ENCODE measurements at regions of chr2 and their contacts with region 1.

Region 1: DNA sequence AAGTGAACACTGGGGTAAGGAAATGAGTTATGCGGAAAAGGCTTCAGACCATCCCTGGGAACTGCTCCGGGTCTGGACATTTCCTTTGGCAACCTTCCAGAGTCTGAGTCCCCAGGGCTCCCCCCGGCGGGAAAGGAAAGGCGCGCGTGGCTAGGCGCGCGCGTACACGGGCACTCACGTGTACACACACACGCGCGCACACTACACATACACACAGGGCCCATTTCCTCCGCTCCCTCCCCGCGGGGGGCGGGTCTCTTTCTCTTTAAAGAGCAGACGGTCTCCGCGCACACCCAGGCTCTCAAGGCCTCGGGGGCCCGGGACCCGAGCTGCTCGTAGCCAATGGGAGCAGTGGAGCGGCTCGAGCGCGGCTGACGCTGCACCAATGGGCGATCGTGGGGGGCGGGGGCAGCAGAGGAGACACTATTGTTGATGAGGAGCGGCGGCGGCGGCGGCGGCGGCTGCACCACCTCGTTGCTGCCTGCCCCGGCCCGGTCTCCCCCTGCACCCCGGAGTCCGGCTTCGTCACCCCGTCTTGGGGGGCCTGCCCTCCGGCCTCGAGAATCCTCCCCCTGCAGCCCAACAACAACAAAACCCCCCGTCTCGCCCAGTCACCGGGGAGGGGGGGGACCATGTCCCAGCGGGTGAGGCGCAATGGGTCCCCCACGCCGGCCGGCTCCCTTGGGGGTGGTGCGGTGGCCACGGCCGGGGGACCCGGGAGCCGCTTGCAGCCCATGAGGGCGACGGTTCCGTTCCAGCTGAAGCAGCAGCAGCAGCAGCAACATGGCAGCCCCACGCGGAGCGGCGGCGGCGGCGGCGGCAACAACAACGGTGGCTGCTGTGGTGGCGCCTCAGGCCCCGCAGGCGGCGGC is at the start of gene FAM117B:
- DNase-seq: peak; percentile 90 to 99 (median 98)
- ATAC-seq: peak; percentile 93
- H3K4me3 ChIP-seq: peak within 1 kb of the TSS; percentile 81
- H3K4me3 Mint-ChIP-seq: peak within 1 kb of the TSS in 9 of 10 donors; percentile 93 to 98 (median 97)
- H3K27ac ChIP-seq: peak within 1 kb of the TSS; percentile 81
- H3K27ac Mint-ChIP-seq: peak within 1 kb of the TSS; percentile 92 to 99 (median 96)
- H3K4me1 ChIP-seq: peaks cover 22 to 29% of the 10 kb centered on the region in 2 donors
- H3K4me1 Mint-ChIP-seq: peaks cover 27 to 66% (median 61%) of the 10 kb centered on the region in 7 donors
- H3K27me3 ChIP-seq: no peaks in the 10 kb centered on the region
- H3K27me3 Mint-ChIP-seq: no peaks in the 10 kb centered on the region
- total RNA-seq, gene FAM117B: 12.8 to 57.9 (median 48.8) TPM

Region 2: DNA sequence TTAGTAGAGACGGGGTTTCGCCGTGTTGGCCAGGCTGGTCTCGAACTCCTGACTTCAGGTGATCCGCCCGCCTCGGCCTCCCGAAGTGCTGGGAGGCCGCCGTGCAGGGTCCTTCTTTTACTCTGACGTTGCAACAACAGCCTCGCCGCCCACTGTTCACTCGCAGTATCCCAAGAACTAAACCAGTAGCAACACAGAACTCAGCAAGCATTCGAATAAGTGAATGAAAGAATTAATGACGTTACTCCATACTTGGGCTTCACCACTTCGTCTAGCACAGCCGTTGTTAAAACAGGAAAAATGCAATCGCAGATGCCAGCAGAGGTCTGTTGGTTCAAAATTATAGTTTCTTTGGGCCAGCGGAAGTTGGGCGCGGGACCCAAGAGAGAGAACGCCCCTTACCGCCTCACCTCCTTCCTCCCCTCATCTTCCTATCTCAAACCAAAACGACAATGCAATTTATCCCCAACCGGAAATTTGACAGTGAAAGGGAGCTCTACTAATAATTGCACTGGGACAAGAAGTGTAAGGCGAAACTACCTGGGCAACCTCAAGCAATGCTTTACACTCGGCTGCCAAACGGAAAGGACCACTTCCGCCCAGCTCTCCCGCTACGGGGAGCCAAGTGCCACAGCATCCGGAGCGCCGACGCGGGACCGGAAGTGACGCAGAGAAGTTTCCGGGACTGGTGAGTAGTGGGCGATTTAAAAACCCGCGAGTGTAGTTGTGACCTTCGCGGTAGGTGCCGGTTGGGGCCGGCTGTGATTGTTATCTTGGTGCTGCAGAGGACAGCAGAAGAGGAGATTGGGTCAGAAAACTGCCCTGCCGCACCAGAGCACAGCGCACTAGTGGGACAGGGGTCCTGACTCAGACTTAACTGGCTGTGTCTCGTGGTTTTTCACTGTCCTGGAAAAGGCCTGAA is 1745.8 kb before region 1 on chr2 and contains the starts of genes NIF3L1 and PPIL3:
- CTCF ChIA-PET with region 1: no interaction called
- POLR2A ChIA-PET with region 1: no interaction called
- intact Hi-C with region 1: loop called in 1 of 2 experiments (anchors 2 kb)
- DNase-seq: peak; percentile 88 to 97 (median 95)
- ATAC-seq: peak; percentile 89
- H3K4me3 ChIP-seq: peak within 1 kb of the TSS; percentile 83
- H3K4me3 Mint-ChIP-seq: peak within 1 kb of the TSS; percentile 88 to 100 (median 96)
- H3K27ac ChIP-seq: peak within 1 kb of the TSS; percentile 86
- H3K27ac Mint-ChIP-seq: peak within 1 kb of the TSS; percentile 97 to 100 (median 100)
- H3K4me1 ChIP-seq: peaks cover 23 to 26% of the 10 kb centered on the region in 2 donors
- H3K4me1 Mint-ChIP-seq: peaks cover 35 to 75% (median 60%) of the 10 kb centered on the region in 7 donors
- H3K27me3 ChIP-seq: no peaks in the 10 kb centered on the region
- H3K27me3 Mint-ChIP-seq: no peaks in the 10 kb centered on the region
- total RNA-seq, gene NIF3L1: 11.5 to 33.9 (median 31.4) TPM
- total RNA-seq, gene PPIL3: 28.5 to 69.7 (median 49.1) TPM

Region 3: DNA sequence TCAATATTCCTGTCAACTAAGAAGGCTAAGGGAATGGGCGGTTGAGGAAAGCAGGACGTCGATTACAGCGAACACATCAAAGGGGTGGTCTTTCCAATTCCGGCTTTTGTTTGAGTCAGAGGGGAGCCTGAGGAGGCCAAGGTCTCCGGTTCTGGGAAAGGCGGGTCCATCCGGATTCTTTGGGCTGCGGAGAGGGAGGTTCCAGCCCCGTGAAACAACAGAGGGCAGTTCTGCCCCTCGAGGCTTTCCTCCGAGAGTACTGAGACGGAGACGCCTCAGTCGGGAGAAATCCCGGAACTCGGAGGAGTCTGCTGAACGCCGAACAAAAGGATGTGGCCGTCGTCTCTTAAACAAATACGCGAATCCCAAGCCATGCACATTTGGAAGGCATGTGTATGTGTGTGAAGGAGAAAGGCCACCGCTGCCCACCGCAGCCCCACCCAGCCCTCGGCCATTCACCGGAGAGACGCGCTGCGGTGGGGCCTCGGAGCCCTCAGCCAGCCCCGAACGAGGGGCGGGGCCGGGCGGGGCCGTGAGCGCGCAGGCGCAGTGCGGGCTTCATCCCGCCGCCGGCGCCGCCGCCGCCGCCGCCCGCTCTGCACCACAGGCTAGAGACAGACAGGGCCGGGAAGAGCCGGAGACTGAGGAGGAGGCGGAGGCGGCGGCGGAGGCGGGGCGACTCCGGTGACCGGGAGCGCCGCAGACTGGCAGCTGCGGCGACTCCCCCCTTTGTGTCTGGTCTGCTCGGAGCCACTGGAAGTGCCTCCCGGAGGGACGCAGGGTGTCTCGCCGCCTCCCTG is 259.0 kb before region 1 on chr2 and contains the start of gene BMPR2:
- CTCF ChIA-PET with region 1: no interaction called
- POLR2A ChIA-PET with region 1: no interaction called
- intact Hi-C with region 1: loop called (anchors 1 to 2 kb)
- DNase-seq: peak; percentile 68 to 94 (median 81)
- ATAC-seq: peak; percentile 90
- H3K4me3 ChIP-seq: peak within 1 kb of the TSS; percentile 95
- H3K4me3 Mint-ChIP-seq: peak within 1 kb of the TSS; percentile 94 to 100 (median 98)
- H3K27ac ChIP-seq: peak within 1 kb of the TSS; percentile 81
- H3K27ac Mint-ChIP-seq: peak within 1 kb of the TSS; percentile 82 to 98 (median 92)
- H3K4me1 ChIP-seq: peaks cover 0 to 3% of the 10 kb centered on the region in 2 donors
- H3K4me1 Mint-ChIP-seq: peaks cover 13 to 41% (median 29%) of the 10 kb centered on the region in 7 donors
- H3K27me3 ChIP-seq: no peaks in the 10 kb centered on the region
- H3K27me3 Mint-ChIP-seq: peaks cover 0 to 28% (median 0%) of the 10 kb centered on the region in 5 donors
- total RNA-seq, gene BMPR2: 8.0 to 33.1 (median 15.2) TPM

Region 4: DNA sequence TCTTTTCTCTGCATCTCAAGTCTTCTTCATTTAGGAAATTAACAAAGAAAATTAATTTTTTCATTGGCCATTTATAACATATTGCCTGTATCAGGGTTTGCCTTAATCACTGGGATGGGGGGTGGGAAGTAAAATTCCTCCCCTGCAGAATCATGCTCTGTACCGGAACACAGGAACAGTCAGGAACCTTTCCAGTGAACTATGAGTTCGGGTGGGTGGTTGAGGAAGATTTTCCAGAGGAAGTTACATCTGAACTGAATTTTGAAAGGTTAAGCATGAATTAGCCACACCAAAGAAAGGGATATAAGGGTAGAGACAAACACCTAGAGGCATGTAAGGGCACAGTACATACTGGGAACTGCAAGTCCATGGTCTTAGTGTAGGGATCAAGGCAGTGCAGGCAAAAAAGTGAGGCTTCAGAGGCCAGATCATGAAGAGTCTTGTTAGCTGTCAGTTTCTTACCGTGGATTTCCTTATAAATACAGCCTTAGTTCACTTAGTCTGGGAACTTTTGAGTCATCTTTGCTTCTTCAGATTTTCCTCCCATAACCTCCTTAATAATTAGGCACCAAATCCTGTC is 55.6 kb after region 1 on chr2:
- CTCF ChIA-PET with region 1: interaction called, 3 read pairs
- POLR2A ChIA-PET with region 1: interaction called, 3 read pairs
- intact Hi-C with region 1: loop called in 1 of 2 experiments (anchors 2 kb)
- DNase-seq: no peak
- ATAC-seq: no peak
- H3K4me3 ChIP-seq: no peak overlapping the region
- H3K4me3 Mint-ChIP-seq: peak overlapping the region in 9 of 10 donors; percentile 18 to 65 (median 47)
- H3K27ac ChIP-seq: no peak overlapping the region
- H3K27ac Mint-ChIP-seq: peak overlapping the region in 8 of 9 donors; percentile 38 to 89 (median 64)
- H3K4me1 ChIP-seq: peaks cover 0 to 10% of the 10 kb centered on the region in 2 donors
- H3K4me1 Mint-ChIP-seq: peaks cover 13 to 94% (median 88%) of the 10 kb centered on the region in 7 donors
- H3K27me3 ChIP-seq: no peaks in the 10 kb centered on the region
- H3K27me3 Mint-ChIP-seq: no peaks in the 10 kb centered on the region

Region 5: GRCh38 chr2:202762556-202762955 is 127.8 kb after region 1 on chr2:
- CTCF ChIA-PET with region 1: interaction called, 3 read pairs
- POLR2A ChIA-PET with region 1: interaction called, 20 read pairs
- intact Hi-C with region 1: loop called (anchors 2 kb)
- DNase-seq: peak in 7 of 9 donors; percentile 11 to 73 (median 47)
- ATAC-seq: peak; percentile 90
- H3K4me3 ChIP-seq: no peak overlapping the region
- H3K4me3 Mint-ChIP-seq: peak overlapping the region; percentile 30 to 87 (median 66)
- H3K27ac ChIP-seq: peak overlapping the region; percentile 52
- H3K27ac Mint-ChIP-seq: peak overlapping the region; percentile 79 to 98 (median 88)
- H3K4me1 ChIP-seq: peaks cover 0 to 27% of the 10 kb centered on the region in 2 donors
- H3K4me1 Mint-ChIP-seq: peaks cover 21 to 74% (median 50%) of the 10 kb centered on the region in 7 donors
- H3K27me3 ChIP-seq: no peaks in the 10 kb centered on the region
- H3K27me3 Mint-ChIP-seq: no peaks in the 10 kb centered on the region

Region 6: DNA sequence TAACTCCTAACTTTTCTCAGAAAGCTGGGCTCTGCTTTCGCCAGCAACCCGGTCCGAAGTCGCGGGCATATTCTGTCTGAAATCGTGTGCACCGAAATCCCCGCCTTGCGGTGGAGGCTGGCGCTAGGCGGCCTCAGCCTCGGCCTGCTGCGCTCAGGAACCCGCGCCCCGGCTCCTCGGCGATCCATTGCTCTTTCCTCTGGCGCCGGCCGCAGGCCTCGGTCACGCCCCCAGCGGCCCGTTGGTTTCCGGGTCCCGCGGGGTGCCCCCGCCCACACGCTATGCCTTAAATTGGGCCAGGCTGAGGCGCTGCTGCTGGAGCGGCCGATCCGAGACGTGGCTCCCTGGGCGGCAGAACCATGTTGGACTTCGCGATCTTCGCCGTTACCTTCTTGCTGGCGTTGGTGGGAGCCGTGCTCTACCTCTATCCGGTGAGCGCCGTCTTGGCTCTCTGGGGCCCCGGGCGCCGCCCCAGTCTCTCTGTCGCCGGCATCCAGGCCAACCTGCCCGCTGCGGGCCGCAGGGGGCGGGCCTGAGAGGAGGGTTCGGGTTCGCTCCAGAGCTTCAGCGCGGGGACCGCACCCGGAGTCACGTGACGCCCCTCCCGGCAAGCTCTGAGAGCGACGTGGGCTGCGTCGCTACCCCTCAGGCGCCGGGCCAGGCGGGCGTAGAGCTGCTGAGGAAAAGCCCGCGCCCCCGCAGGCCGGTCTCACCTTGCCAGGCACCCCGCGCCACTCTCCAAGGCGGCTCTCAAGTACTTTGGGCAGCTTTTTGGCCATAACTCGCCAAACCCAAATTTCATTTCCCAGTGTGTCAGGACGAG is 604.1 kb after region 1 on chr2 and contains the start of gene CYP20A1:
- CTCF ChIA-PET with region 1: no interaction called
- POLR2A ChIA-PET with region 1: interaction called, 3 read pairs
- intact Hi-C with region 1: loop called (anchors 1 kb)
- DNase-seq: peak; percentile 94 to 99 (median 98)
- ATAC-seq: peak; percentile 91
- H3K4me3 ChIP-seq: peak within 1 kb of the TSS; percentile 97
- H3K4me3 Mint-ChIP-seq: peak within 1 kb of the TSS; percentile 90 to 100 (median 95)
- H3K27ac ChIP-seq: peak within 1 kb of the TSS; percentile 98
- H3K27ac Mint-ChIP-seq: peak within 1 kb of the TSS; percentile 96 to 100 (median 98)
- H3K4me1 ChIP-seq: peaks cover 6 to 14% of the 10 kb centered on the region in 2 donors
- H3K4me1 Mint-ChIP-seq: peaks cover 25 to 45% (median 33%) of the 10 kb centered on the region in 7 donors
- H3K27me3 ChIP-seq: no peaks in the 10 kb centered on the region
- H3K27me3 Mint-ChIP-seq: no peaks in the 10 kb centered on the region
- total RNA-seq, gene CYP20A1: 23.7 to 43.3 (median 28.3) TPM